Lower leg skin (tissue), 4 donors: ENCODE measurements at regions of chr20 and their contacts with region 1.

Region 1: GRCh38 chr20:483813-484644 is 21.7 kb upstream of the TBC1D20 start:
- DNase-seq: no peak
- H3K4me3 ChIP-seq: no peak overlapping the region
- CTCF ChIP-seq: no peak
- POLR2A ChIP-seq: no peak

Region 2: DNA sequence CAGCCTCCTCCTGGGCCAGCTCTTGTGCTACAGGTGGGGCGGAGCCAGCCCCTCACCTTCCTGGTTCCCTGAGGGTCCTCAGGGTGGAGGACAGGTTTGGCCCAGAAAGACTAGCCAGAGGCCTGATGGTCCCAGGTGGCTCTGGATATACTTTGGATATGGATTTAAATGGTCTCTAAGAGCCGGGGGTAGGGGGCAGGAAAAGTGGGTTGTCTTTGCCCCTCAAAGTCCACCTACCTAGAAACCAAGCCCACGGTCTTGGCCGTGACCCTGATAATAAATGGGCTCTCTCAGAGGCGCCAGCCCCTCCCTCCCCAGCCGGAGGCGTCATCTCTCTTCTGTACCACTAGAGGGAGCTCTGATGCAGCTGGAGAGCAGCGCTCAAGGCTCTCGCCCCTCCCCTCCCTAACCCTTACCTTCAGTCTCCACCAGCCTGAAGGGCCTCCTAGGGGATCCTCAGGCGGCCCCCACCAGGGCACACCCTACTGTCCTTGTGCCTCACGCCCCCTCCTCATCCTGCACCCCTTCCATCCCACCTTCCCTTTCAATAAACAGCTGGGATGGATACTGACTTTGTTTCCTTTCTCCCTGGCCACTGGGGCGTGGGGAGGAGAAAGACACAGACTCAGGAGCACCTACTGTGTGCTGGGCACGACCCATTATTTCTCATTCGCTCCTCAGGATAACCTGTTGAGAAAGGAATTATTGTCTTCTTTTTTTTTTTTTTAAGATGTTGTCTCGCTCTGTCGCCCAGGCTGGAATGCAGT is 129.5 kb before region 1 on chr20:
- intact Hi-C with region 1: loop called (anchors 5 kb)
- DNase-seq: peak; percentile 60 to 95
- H3K4me3 ChIP-seq: no peak overlapping the region
- CTCF ChIP-seq: peak in 1 of 3 donors; percentile 74
- POLR2A ChIP-seq: no peak